Lower leg skin (tissue), 4 donors: ENCODE measurements at regions of chr15 and their contacts with region 1.

Region 1: DNA sequence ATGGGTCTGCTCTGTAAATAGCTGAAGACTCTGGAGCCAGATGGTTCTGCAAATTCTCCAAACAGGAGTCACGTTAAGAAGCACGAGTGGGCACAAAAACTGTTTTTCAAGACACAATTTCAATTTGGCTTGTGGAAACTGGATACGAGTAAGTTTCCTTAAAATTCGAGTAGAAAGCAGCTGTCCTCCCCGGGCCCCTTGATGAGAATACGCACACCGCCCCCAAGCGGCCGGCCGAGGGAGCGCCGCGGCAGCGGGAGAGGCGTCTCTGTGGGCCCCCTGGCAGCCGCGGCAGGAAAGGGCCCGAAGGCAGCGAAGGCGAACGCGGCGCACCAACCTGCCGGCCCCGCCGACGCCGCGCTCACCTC is 778 bp upstream of the THBS1 start:
- DNase-seq: peak; percentile 93 to 99
- H3K4me3 ChIP-seq: peak overlapping the region; percentile 56
- CTCF ChIP-seq: peak in 2 of 3 donors; percentile 41 to 80
- POLR2A ChIP-seq: no peak

Region 2: GRCh38 chr15:39171944-39172368 is 408.1 kb before region 1 on chr15:
- intact Hi-C with region 1: loop called (anchors 2 kb)
- DNase-seq: peak; percentile 50 to 87
- H3K4me3 ChIP-seq: no peak overlapping the region
- CTCF ChIP-seq: no peak
- POLR2A ChIP-seq: no peak

Region 3: GRCh38 chr15:39526206-39526605 is 53.9 kb before region 1 on chr15:
- intact Hi-C with region 1: no loop called
- DNase-seq: no peak
- H3K4me3 ChIP-seq: no peak overlapping the region
- CTCF ChIP-seq: no peak
- POLR2A ChIP-seq: no peak

Region 4: GRCh38 chr15:39657714-39658113 is 77.6 kb after region 1 on chr15:
- intact Hi-C with region 1: no loop called
- DNase-seq: no peak
- H3K4me3 ChIP-seq: no peak overlapping the region
- CTCF ChIP-seq: no peak
- POLR2A ChIP-seq: no peak

Region 5: GRCh38 chr15:39736412-39737197 is 156.5 kb after region 1 on chr15:
- intact Hi-C with region 1: no loop called
- DNase-seq: no peak
- H3K4me3 ChIP-seq: no peak overlapping the region
- CTCF ChIP-seq: no peak
- POLR2A ChIP-seq: no peak

Region 6: GRCh38 chr15:39756806-39757522 is 176.9 kb after region 1 on chr15:
- intact Hi-C with region 1: no loop called
- DNase-seq: no peak
- H3K4me3 ChIP-seq: no peak overlapping the region
- CTCF ChIP-seq: peak in 1 of 3 donors; percentile 74
- POLR2A ChIP-seq: no peak